ENCODE measurements at regions of chr4 and their contacts with region 1.

Region 1: GRCh38 chr4:115851918-115852766 is 738.7 kb upstream of the NDST4 start:
- DNase-seq: peak; percentile 67 to 78 (median 72)
- ATAC-seq: peak; percentile 76
- H3K4me3 ChIP-seq: no peak overlapping the region
- H3K27ac ChIP-seq: no peak overlapping the region
- H3K4me1 ChIP-seq: peaks cover 3% of the 10 kb centered on the region
- H3K27me3 ChIP-seq: no peaks in the 10 kb centered on the region
- CTCF ChIP-seq: peak; percentile 44 to 69 (median 54)
- POLR2A ChIP-seq: no peak

Region 2: GRCh38 chr4:115090483-115091075 is 761.6 kb before region 1 on chr4:
- intact Hi-C with region 1: loop called (anchors 10 kb)
- DNase-seq: no peak
- ATAC-seq: peak; percentile 42
- H3K4me3 ChIP-seq: no peak overlapping the region
- H3K27ac ChIP-seq: no peak overlapping the region
- H3K4me1 ChIP-seq: no peaks in the 10 kb centered on the region
- H3K27me3 ChIP-seq: no peaks in the 10 kb centered on the region
- CTCF ChIP-seq: peak; percentile 48 to 65 (median 57)
- POLR2A ChIP-seq: no peak

Region 3: DNA sequence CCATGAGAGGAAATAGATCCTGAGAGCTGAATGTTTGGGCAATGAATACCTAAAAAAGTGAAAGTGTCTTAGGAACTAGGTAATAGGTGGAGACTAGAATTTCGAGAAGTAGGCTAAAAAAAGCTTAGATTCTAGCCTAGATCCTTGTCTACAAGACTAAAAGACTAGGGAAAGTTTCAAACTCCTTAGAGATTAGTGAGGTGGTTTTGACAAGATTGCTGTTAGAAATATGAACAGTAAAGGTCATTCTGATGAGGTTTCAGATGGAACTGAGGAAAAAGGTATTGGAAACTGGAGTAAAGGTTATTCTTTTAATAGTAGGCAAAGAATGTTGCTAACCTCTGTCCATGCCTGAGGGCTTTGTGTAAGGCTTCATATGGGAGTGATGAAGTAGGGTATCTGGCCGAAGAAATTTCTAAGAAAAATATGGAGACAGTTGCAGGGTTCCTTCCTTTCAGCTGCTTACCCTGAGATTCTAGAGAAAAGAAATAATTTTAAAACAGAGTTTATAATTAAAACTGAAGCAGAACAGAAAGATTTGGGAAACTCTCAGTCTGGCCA is 384.9 kb before region 1 on chr4:
- intact Hi-C with region 1: no loop called
- DNase-seq: no peak
- ATAC-seq: no peak
- H3K4me3 ChIP-seq: no peak overlapping the region
- H3K27ac ChIP-seq: no peak overlapping the region
- H3K4me1 ChIP-seq: no peaks in the 10 kb centered on the region
- H3K27me3 ChIP-seq: no peaks in the 10 kb centered on the region
- CTCF ChIP-seq: no peak
- POLR2A ChIP-seq: no peak

Region 4: GRCh38 chr4:115720611-115721010 is 131.5 kb before region 1 on chr4:
- intact Hi-C with region 1: no loop called
- DNase-seq: no peak
- ATAC-seq: no peak
- H3K4me3 ChIP-seq: no peak overlapping the region
- H3K27ac ChIP-seq: no peak overlapping the region
- H3K4me1 ChIP-seq: no peaks in the 10 kb centered on the region
- H3K27me3 ChIP-seq: no peaks in the 10 kb centered on the region
- CTCF ChIP-seq: no peak
- POLR2A ChIP-seq: no peak